ENCODE measurements at regions of chr3 and their contacts with region 1.

Region 1: GRCh38 chr3:95235916-95236315 is 1173.1 kb downstream of the NSUN3 start:
- DNase-seq: no peak
- H3K4me3 ChIP-seq: no peak overlapping the region
- H3K27ac ChIP-seq: no peak overlapping the region
- H3K4me1 ChIP-seq: no peaks in the 10 kb centered on the region
- H3K27me3 ChIP-seq: no peaks in the 10 kb centered on the region
- CTCF ChIP-seq: no peak

Region 2: GRCh38 chr3:94500146-94500545 is 735.8 kb before region 1 on chr3:
- CTCF ChIA-PET with region 1: no interaction called
- POLR2A ChIA-PET with region 1: no interaction called
- intact Hi-C with region 1: no loop called
- DNase-seq: no peak
- H3K4me3 ChIP-seq: no peak overlapping the region
- H3K27ac ChIP-seq: no peak overlapping the region
- H3K4me1 ChIP-seq: no peaks in the 10 kb centered on the region
- H3K27me3 ChIP-seq: no peaks in the 10 kb centered on the region
- CTCF ChIP-seq: no peak

Region 3: GRCh38 chr3:95197616-95198015 is 38.3 kb before region 1 on chr3:
- CTCF ChIA-PET with region 1: no interaction called
- POLR2A ChIA-PET with region 1: no interaction called
- intact Hi-C with region 1: loop called (anchors 2 kb)
- DNase-seq: no peak
- H3K4me3 ChIP-seq: no peak overlapping the region
- H3K27ac ChIP-seq: no peak overlapping the region
- H3K4me1 ChIP-seq: no peaks in the 10 kb centered on the region
- H3K27me3 ChIP-seq: no peaks in the 10 kb centered on the region
- CTCF ChIP-seq: no peak